Naive thymus-derived CD8-positive, alpha-beta T cell (primary cell): ENCODE measurements at regions of chr2 and their contacts with region 1.

Region 1: GRCh38 chr2:179031731-179032408 is 18.1 kb downstream of the CCDC141 start:
- DNase-seq: peak in 5 of 10 donors; percentile 13 to 70 (median 49)
- ATAC-seq: peak; percentile 91 to 94
- H3K4me3 Mint-ChIP-seq: peak overlapping the region; percentile 71 to 91 (median 84)
- H3K27ac Mint-ChIP-seq: peak overlapping the region; percentile 94 to 100 (median 98)
- H3K4me1 Mint-ChIP-seq: peaks cover 22 to 33% (median 26%) of the 10 kb centered on the region in 4 donors
- H3K27me3 Mint-ChIP-seq: no peaks in the 10 kb centered on the region

Region 2: DNA sequence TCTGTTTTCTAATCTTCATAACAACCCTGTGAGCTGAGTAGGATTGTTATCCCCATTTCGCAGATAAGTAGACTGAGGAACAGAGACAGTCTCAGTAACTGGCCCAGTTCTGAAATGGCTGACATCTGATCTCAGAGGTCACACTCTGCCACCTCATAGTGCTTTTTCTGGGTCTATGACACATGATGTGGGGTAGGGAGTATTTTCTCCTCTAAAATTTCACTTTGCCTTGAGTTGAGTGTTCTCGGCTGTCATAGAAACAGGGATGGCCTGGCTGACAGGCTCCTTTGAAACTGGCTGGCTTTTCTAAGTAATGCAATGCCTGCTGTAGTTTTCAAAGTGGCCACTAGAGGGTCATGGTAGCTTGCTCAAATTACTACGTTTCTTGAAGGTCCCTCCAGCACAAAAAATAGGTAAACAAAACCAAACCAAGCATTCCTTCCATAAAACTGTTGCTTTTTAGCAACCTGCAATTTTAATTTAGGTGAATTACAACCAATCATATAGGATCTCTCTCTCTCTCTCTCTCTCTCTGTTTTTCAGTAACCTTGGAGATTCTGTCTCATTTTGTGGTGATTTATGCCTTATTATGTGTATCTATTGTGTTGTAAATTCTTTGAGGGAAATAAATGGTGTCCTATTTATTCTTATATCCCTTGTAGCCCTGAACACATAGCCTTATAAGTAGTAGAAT is 140.5 kb before region 1 on chr2:
- POLR2A ChIA-PET with region 1: no interaction called
- DNase-seq: peak; percentile 20 to 79 (median 56)
- ATAC-seq: peak; percentile 69 to 77
- H3K4me3 Mint-ChIP-seq: no peak overlapping the region
- H3K27ac Mint-ChIP-seq: no peak overlapping the region
- H3K4me1 Mint-ChIP-seq: peaks cover 4 to 15% (median 6%) of the 10 kb centered on the region in 4 donors
- H3K27me3 Mint-ChIP-seq: no peaks in the 10 kb centered on the region

Region 3: DNA sequence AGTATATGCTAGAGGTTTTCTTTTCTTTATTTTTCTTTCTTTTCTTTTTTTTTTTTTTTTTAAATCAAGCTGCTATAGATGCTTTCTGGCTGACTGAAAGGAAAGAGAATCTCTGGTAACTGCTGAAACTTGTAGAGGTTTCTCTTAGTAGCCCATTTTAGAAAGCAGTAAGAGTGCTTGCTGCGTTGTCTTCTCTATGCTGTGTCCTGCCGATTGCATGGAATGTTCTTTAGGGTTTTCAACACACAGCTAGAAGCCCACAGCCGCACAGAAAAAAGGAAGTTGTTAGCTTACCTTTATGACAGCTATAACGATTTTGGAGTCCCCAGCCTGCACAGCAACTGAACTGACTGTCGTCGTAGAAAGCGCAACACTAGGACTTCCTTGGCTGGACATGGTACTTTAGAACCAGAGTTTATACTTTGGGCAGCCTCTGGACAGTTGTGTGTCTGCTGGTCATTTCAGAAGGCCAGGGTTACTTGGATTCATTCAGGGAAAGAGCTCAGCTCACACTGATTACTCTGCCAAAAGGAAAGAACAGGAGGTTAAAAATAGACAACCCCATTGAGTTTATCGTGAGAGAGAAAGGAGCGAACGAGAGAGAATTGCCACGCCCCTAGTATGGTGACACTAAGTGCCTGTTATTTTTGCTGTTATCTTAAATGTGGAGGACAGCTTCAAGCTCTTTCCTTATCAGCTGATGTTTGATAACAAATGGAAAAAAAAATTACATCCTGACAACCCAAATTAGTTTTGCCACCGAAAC is 17.9 kb after region 1 on chr2 and contains the start of gene CCDC141:
- POLR2A ChIA-PET with region 1: interaction called, 29 read pairs
- DNase-seq: peak in 7 of 10 donors; percentile 9 to 54 (median 31)
- ATAC-seq: peak; percentile 81 to 85
- H3K4me3 Mint-ChIP-seq: peak within 1 kb of the TSS; percentile 89 to 97 (median 96)
- H3K27ac Mint-ChIP-seq: peak within 1 kb of the TSS; percentile 90 to 99 (median 97)
- H3K4me1 Mint-ChIP-seq: peaks cover 3 to 60% (median 46%) of the 10 kb centered on the region in 4 donors
- H3K27me3 Mint-ChIP-seq: no peaks in the 10 kb centered on the region
- polyA plus RNA-seq, gene CCDC141: 4.2 to 12.0 (median 9.8) TPM